ENCODE measurements at regions of chr14 and their contacts with region 1.

Region 1: DNA sequence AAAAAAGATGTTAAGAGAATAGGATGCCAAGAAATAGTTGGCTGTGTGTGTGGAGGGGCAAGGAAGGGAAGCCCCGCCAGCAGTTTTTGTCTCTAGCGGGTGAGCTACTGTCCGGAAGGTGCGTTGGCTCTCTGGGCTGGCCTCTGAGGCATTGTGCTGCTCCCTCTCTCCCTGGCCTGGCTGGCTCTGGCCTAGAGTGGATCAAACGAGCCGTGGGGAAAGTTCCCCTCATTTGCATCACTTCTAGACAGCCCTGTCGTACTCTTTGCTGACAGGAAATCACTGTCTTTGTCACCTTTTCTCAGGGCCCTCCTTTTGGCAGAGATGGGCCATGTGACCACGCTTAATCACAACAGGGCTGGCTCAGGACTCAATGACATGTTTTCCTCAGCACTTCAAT is 236.1 kb upstream of the NPAS3 start:
- DNase-seq: peak; percentile 26 to 38
- ATAC-seq: peak; percentile 82 to 96 (median 84)
- H3K4me3 ChIP-seq: peak overlapping the region in 1 of 10 donors; percentile 6
- H3K27ac ChIP-seq: peak overlapping the region; percentile 56 to 87 (median 74)
- H3K4me1 ChIP-seq: peaks cover 9 to 38% (median 31%) of the 10 kb centered on the region in 9 donors
- H3K27me3 ChIP-seq: no peaks in the 10 kb centered on the region
- CTCF ChIP-seq: no peak

Region 2: GRCh38 chr14:32826404-32827082 is 124.0 kb after region 1 on chr14:
- intact Hi-C with region 1: loop called in 2 of 10 experiments (anchors 5 to 10 kb)
- DNase-seq: peak in 1 of 2 donors; percentile 29
- ATAC-seq: peak; percentile 31 to 79 (median 73)
- H3K4me3 ChIP-seq: no peak overlapping the region
- H3K27ac ChIP-seq: peak overlapping the region in 6 of 10 donors; percentile 18 to 68 (median 28)
- H3K4me1 ChIP-seq: peaks cover 0 to 67% (median 29%) of the 10 kb centered on the region in 9 donors
- H3K27me3 ChIP-seq: no peaks in the 10 kb centered on the region
- CTCF ChIP-seq: peak in 5 of 9 donors; percentile 18 to 45 (median 43)

Region 3: DNA sequence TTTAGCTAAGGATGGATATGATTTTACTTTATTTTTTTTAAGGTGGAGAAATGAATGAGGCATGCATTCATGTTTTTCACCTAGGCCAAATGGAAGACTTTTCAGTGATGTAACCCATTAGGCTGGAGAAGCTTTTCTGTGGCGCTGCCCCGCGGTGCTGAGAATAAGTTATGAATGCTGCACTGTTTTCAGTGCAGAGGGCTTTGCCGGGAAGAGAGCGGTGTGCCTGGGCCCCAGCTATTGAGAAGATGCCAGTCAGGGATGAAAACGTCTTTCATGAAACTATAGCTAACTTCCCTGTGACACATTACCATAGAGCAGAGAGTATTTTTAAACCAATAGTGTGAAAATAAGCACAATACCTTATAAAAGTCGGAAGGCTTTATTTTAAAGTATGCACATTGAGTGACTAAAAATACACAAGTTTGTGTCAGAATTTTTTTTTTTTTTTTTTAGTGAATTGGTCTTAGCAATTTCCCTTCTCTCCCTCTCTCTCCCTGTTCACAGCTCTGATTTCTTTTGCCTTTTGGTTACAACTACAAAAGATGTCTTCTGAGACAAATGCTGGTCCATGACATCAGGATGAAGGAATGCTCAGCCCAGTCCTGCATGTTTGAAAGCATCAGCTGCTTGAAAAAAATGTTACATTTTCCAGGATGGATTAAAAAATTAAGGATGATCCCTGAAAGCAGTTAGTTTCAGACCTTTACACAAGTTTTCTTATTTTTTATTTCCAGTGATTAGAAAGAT is 284.4 kb after region 1 on chr14:
- intact Hi-C with region 1: loop called in 1 of 10 experiments (anchors 10 kb)
- DNase-seq: peak in 1 of 2 donors; percentile 16
- ATAC-seq: peak in 5 of 8 donors; percentile 42 to 74 (median 61)
- H3K4me3 ChIP-seq: no peak overlapping the region
- H3K27ac ChIP-seq: peak overlapping the region in 6 of 10 donors; percentile 5 to 56 (median 36)
- H3K4me1 ChIP-seq: no peaks in the 10 kb centered on the region
- H3K27me3 ChIP-seq: no peaks in the 10 kb centered on the region
- CTCF ChIP-seq: no peak